ENCODE measurements at regions of chr7 and their contacts with region 1.

Region 1: GRCh38 chr7:107879400-107880035 is 11.5 kb upstream of the DLD start:
- H3K4me3 ChIP-seq: no peak overlapping the region
- H3K27ac ChIP-seq: no peak overlapping the region
- H3K4me1 ChIP-seq: no peaks in the 10 kb centered on the region
- CTCF ChIP-seq: peak; percentile 11; the same call in 1 of the 2 replicates

Region 2: DNA sequence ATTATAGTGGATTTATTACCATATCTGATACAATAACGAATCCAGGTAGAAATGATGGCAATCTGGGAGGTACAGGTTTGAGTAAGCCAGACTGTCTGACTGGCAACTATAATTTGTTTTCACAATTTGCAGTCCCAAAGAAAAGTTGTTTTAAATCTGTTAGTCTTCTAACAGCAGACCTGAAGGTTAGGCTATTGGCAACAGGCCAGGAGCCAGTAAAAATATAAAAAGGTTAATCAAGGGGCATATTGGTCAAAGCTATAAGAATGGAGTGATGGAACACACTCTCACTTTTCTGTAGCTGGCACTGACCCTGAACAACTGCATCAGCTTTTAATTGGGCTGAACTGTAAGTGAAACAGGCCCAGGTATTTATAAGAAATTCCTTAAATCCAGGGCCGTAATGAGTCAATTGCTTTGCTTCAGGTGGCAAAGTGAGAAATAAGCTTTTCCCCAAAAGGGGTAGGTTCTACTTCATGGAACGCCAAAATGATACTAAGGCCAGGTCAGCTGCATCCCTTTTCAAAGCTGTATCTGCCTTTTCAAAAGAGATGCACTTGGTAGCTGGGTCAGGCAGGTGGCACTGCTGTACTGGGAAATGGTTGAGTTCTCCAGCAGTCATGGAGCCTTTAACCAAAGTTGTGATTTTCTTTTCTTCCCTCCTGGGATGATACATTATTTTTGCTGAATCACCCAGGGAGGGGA is 416.6 kb before region 1 on chr7:
- CTCF ChIA-PET with region 1: interaction called, 13 read pairs
- POLR2A ChIA-PET with region 1: no interaction called
- H3K4me3 ChIP-seq: no peak overlapping the region
- H3K27ac ChIP-seq: no peak overlapping the region
- H3K4me1 ChIP-seq: no peaks in the 10 kb centered on the region
- CTCF ChIP-seq: peak; percentile 71

Region 3: DNA sequence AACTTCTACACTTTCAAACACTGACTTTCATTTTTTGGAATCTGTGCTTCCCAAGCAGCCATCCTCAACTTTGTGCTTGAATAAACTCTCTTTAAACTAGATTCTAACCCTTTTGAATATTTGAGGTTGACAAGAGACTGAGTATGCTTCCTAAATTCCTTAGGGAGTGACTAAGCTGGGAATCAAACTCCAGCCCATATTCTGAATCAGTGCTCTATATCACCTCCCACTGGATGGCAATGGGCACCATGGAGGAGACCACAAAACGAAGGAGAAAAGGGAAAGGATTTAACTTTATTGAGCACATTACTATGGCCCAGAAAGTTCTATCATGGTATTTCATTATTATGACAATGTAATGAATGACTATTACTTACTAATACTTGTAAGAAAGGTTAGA is 236.1 kb before region 1 on chr7:
- CTCF ChIA-PET with region 1: no interaction called
- POLR2A ChIA-PET with region 1: no interaction called
- H3K4me3 ChIP-seq: no peak overlapping the region
- H3K27ac ChIP-seq: no peak overlapping the region
- H3K4me1 ChIP-seq: no peaks in the 10 kb centered on the region
- CTCF ChIP-seq: no peak

Region 4: DNA sequence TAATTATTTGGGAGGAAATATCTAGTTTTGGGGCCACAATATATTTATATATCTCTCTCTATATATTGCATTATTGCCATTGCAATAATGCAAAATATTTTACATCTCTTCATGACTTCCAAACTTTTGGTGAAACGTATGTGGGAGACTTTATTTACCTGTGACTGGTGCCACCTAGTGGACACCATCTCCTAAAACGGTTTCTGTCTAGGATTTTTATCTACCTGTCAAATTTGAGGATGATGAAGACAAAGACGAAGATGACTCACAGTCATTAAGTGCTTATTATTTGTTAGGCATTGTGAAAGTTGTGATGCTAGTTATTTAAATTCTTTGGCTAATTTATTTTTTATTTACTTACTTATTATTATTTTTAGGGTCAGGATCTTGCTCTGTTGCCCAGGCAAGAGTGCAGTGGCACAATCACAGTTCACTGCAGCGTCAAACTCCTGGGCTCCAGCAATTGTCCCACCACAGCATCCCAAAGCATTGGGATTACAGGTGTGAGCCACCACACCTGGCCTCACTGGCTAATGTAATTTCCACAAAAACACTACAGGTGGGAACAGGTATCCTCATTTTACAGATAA is 154.3 kb before region 1 on chr7:
- CTCF ChIA-PET with region 1: interaction called, 10 read pairs
- POLR2A ChIA-PET with region 1: no interaction called
- H3K4me3 ChIP-seq: no peak overlapping the region
- H3K27ac ChIP-seq: no peak overlapping the region
- H3K4me1 ChIP-seq: no peaks in the 10 kb centered on the region
- CTCF ChIP-seq: peak; percentile 27; the same call in 1 of the 2 replicates

Region 5: GRCh38 chr7:107743567-107744344 is 135.8 kb before region 1 on chr7 and contains the start of gene CBLL1:
- CTCF ChIA-PET with region 1: interaction called, 106 read pairs
- POLR2A ChIA-PET with region 1: interaction called, 13 read pairs
- H3K4me3 ChIP-seq: peak within 1 kb of the TSS; percentile 73
- H3K27ac ChIP-seq: peak within 1 kb of the TSS; percentile 82
- H3K4me1 ChIP-seq: peaks cover 2% of the 10 kb centered on the region; the same call in 1 of the 2 replicates
- CTCF ChIP-seq: peak; percentile 94

Region 6: GRCh38 chr7:107754642-107755041 is 124.9 kb before region 1 on chr7:
- CTCF ChIA-PET with region 1: no interaction called
- POLR2A ChIA-PET with region 1: no interaction called
- H3K4me3 ChIP-seq: no peak overlapping the region
- H3K27ac ChIP-seq: no peak overlapping the region
- H3K4me1 ChIP-seq: no peaks in the 10 kb centered on the region
- CTCF ChIP-seq: no peak

Region 7: GRCh38 chr7:107867858-107868466 is 11.6 kb before region 1 on chr7:
- CTCF ChIA-PET with region 1: interaction called, 12 read pairs
- POLR2A ChIA-PET with region 1: no interaction called
- H3K4me3 ChIP-seq: no peak overlapping the region
- H3K27ac ChIP-seq: no peak overlapping the region
- H3K4me1 ChIP-seq: no peaks in the 10 kb centered on the region
- CTCF ChIP-seq: no peak

Region 8: DNA sequence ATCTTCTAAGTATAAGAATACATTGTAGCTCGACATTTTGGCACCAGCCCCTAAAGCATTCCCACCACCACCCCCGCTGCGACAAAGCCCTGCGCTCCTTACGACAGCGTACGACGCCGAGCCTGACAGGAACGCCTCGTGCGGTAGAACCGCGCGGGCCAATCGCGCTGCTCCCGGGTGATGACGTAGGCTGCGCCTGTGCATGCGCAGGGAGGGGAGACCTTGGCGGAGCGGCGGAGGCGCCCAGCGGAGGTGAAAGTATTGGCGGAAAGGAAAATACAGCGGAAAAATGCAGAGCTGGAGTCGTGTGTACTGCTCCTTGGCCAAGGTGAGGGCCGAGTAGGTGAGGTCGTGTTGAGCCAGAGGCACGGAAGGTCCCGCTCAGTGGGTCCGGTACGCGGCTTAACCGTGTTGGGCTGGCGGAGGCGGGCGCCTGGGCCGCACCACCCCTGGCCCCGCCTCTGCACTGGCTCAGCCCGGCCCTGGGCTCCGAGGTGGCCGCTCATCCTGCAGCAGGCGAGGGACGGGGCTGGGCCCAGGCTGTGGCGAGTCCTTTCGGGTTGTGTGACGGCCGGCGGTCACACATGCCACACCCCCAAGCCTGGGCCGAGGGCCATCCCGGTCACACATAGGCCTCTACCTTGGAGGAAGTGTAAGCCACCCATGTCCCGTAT is 11.6 kb after region 1 on chr7 and contains the start of gene DLD:
- CTCF ChIA-PET with region 1: interaction called, 28 read pairs
- POLR2A ChIA-PET with region 1: no interaction called
- H3K4me3 ChIP-seq: peak within 1 kb of the TSS; percentile 69
- H3K27ac ChIP-seq: peak within 1 kb of the TSS; percentile 77
- H3K4me1 ChIP-seq: peaks cover 2% of the 10 kb centered on the region; the same call in 1 of the 2 replicates
- CTCF ChIP-seq: no peak

Region 9: GRCh38 chr7:108016841-108017775 is 137.6 kb after region 1 on chr7:
- CTCF ChIA-PET with region 1: no interaction called
- POLR2A ChIA-PET with region 1: no interaction called
- H3K4me3 ChIP-seq: no peak overlapping the region
- H3K27ac ChIP-seq: peak overlapping the region; percentile 47
- H3K4me1 ChIP-seq: peaks cover 24% of the 10 kb centered on the region
- CTCF ChIP-seq: no peak

Measured in HEK293 (cell line).